ENCODE measurements at regions of chr17 and their contacts with region 1.

Region 1: DNA sequence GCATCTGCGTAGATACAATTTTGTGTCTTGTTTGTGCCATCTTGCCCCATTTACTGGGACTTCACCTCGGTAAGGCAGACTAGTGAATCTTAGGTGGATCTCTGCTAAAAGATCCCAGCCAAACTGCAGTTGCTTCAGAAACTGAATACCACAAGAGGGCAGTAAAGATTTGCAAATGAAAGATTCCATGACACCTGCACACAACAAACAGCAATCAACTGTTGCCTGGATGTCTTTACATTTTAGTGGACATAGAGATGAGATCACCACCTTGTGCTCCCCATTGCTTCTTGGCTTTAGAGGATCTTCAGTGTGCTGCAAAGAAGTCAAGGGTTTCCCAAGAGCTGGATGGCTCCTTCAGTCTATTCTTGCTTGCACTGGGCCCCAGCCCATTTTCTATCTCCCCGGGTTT is 119.2 kb upstream of the CACNG5 start:
- DNase-seq: no peak
- H3K4me3 ChIP-seq: no peak overlapping the region
- H3K27ac ChIP-seq: peak overlapping the region in 1 of 4 donors; percentile 3
- H3K4me1 ChIP-seq: peaks cover 7 to 20% (median 11%) of the 10 kb centered on the region in 4 donors
- H3K27me3 ChIP-seq: no peaks in the 10 kb centered on the region
- CTCF ChIP-seq: peak; percentile 67 to 72 (median 69)
- EP300 ChIP-seq: no peak
- POLR2A ChIP-seq: no peak

Region 2: DNA sequence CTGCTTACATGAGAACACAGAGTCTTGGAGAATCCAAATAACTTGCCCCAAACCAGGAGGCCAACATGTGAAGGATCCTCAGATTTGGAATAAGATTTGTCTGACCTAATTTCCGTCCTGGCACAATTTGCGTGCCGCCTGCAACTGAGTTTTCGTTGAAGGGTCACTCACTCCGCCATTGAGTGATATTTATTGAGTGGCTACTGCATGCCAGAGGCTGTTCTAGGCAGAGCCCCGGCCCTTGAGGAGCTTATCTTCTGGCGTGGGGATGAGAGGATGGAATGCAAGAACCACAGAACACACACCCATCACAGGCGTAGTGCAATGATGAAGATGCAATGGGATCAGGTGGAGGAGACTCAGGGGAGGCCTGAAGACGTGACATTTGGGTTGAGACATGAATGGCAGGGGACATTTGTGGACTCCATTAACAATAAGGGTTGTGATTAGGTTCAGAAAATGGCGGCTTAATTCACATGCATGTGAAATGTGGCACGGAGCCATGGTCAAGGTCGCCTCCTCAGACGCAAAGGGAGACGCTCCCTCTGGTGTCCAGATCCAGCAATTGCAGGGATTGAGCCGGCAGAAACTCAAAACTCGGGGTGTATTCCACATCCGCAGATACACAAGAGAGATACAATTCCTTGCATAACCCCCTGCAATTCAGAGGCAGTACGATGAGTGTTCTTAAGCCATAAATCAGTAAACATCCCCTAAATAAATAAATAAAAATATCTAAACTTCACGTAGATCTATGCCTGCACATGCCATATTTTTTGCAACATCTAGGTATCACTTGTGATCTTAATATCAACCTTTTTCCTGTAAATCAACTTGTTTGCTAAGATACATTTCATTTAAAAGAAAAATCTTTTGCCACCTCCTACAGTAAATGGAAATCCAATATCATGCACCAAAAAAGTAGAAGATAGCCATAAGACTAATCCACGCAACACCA is 190.8 kb after region 1 on chr17:
- intact Hi-C with region 1: loop called (anchors 5 kb)
- DNase-seq: no peak
- H3K4me3 ChIP-seq: no peak overlapping the region
- H3K27ac ChIP-seq: no peak overlapping the region
- H3K4me1 ChIP-seq: peaks cover 9 to 23% (median 13%) of the 10 kb centered on the region in 4 donors
- H3K27me3 ChIP-seq: no peaks in the 10 kb centered on the region
- CTCF ChIP-seq: peak; percentile 85 to 89 (median 89)
- EP300 ChIP-seq: no peak
- POLR2A ChIP-seq: no peak

Measured in esophagus muscularis mucosa (tissue), 4 donors.